ENCODE measurements at regions of chr12 and their contacts with region 1.

Region 1: GRCh38 chr12:53287741-53288216 is 7.6 kb upstream of the PFDN5 start:
- DNase-seq: peak; percentile 74 to 83
- H3K4me3 ChIP-seq: no peak overlapping the region
- H3K27ac ChIP-seq: no peak overlapping the region
- H3K4me1 ChIP-seq: no peaks in the 10 kb centered on the region
- H3K27me3 ChIP-seq: no peaks in the 10 kb centered on the region
- CTCF ChIP-seq: peak in 5 of 7 experiments; percentile 31 to 73 (median 52)
- EP300 ChIP-seq: no peak
- POLR2A ChIP-seq: no peak

Region 2: DNA sequence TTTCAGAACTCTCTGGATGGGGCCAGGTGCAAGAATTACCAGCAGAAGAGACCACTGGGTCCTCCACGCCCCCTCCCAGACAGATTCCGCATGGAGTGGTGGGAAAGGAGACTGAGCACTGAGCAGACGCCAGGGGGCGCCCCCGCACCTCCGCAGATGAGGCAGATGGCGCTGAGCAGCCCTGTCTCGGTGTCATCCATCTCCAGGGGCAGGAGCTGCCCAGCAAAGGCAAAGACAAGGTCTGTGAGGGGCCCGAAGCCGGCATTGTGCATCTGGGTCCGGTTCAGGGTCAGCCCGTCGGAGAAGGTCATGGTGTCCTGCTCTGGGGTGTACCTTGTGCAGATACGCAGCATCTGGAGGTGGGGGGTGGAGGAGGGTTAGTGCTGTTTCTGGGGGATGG is 74.4 kb before region 1 on chr12:
- intact Hi-C with region 1: loop called (anchors 10 kb)
- DNase-seq: peak; percentile 84 to 93
- H3K4me3 ChIP-seq: no peak overlapping the region
- H3K27ac ChIP-seq: no peak overlapping the region
- H3K4me1 ChIP-seq: peaks cover 28 to 68% (median 55%) of the 10 kb centered on the region in 4 donors
- H3K27me3 ChIP-seq: no peaks in the 10 kb centered on the region
- CTCF ChIP-seq: peak in 6 of 7 experiments; percentile 39 to 96 (median 88)
- EP300 ChIP-seq: no peak
- POLR2A ChIP-seq: no peak

Region 3: GRCh38 chr12:53231826-53232645 is 55.7 kb before region 1 on chr12 and contains the start of gene RARG:
- intact Hi-C with region 1: no loop called
- DNase-seq: peak; percentile 63 to 84
- H3K4me3 ChIP-seq: peak within 1 kb of the TSS; percentile 57 to 73 (median 66)
- H3K27ac ChIP-seq: peak within 1 kb of the TSS; percentile 78 to 90 (median 89)
- H3K4me1 ChIP-seq: peaks cover 28 to 62% (median 51%) of the 10 kb centered on the region in 4 donors
- H3K27me3 ChIP-seq: peaks cover 0 to 12% (median 0%) of the 10 kb centered on the region in 3 donors
- CTCF ChIP-seq: no peak
- EP300 ChIP-seq: no peak
- POLR2A ChIP-seq: no peak
- total RNA-seq, gene RARG: 2.0 to 26.5 (median 9.5) TPM